Pancreas (tissue), 10 donors: ENCODE measurements at regions of chr2 and their contacts with region 1.

Region 1: DNA sequence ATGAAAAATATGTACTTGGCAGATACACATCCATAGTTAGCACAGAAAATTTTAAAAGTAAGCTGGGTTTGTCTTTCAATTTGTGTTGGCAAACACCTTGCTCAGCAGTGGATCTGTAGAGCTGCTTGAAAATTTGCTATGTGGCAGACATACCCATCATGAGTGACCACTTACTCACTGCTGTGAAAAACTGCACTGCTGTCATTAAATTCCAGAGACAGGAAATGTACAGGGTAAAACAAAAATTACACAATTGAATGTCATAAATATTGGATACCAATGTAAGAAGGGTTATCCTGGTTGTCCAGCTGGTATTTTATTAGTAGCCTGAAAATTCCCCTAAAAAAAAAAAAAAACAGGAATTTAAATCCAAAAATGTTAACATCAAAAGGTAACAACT is 24.5 kb downstream of the NIF3L1 start:
- DNase-seq: no peak
- ATAC-seq: no peak
- H3K4me3 ChIP-seq: no peak overlapping the region
- H3K27ac ChIP-seq: no peak overlapping the region
- H3K4me1 ChIP-seq: no peaks in the 10 kb centered on the region
- H3K27me3 ChIP-seq: no peaks in the 10 kb centered on the region
- CTCF ChIP-seq: no peak

Region 2: DNA sequence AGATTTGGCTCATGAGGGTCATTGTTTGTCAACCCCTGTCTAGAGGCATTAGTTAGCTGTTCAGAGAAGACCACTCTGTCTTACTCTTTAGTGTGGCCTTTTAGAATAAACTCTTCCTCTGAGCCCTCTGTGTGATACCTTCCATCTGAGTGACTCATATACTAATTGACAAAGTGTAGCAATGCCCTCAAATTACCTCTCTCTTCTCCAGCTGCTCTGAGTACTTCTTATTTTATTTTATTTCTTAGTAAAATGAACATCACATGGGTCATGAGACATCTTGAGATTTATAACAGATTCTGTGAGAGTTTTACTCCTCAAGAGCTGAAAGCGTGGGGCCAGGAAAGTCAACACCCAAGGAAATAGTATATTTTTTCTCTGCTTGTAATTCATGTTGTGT is 471.2 kb before region 1 on chr2:
- intact Hi-C with region 1: no loop called
- DNase-seq: no peak
- ATAC-seq: no peak
- H3K4me3 ChIP-seq: no peak overlapping the region
- H3K27ac ChIP-seq: no peak overlapping the region
- H3K4me1 ChIP-seq: no peaks in the 10 kb centered on the region
- H3K27me3 ChIP-seq: no peaks in the 10 kb centered on the region
- CTCF ChIP-seq: no peak

Region 3: GRCh38 chr2:201059961-201060755 is 146.5 kb after region 1 on chr2:
- intact Hi-C with region 1: loop called in 1 of 3 experiments (anchors 10 kb)
- DNase-seq: no peak
- ATAC-seq: no peak
- H3K4me3 ChIP-seq: no peak overlapping the region
- H3K27ac ChIP-seq: no peak overlapping the region
- H3K4me1 ChIP-seq: peaks cover 0 to 14% (median 0%) of the 10 kb centered on the region in 3 donors
- H3K27me3 ChIP-seq: no peaks in the 10 kb centered on the region
- CTCF ChIP-seq: no peak